Activated B cell treated with CpG ODN at 0.5 μM for 24 hours (primary cell): ENCODE measurements at regions of chr16 and their contacts with region 1.

Region 1: DNA sequence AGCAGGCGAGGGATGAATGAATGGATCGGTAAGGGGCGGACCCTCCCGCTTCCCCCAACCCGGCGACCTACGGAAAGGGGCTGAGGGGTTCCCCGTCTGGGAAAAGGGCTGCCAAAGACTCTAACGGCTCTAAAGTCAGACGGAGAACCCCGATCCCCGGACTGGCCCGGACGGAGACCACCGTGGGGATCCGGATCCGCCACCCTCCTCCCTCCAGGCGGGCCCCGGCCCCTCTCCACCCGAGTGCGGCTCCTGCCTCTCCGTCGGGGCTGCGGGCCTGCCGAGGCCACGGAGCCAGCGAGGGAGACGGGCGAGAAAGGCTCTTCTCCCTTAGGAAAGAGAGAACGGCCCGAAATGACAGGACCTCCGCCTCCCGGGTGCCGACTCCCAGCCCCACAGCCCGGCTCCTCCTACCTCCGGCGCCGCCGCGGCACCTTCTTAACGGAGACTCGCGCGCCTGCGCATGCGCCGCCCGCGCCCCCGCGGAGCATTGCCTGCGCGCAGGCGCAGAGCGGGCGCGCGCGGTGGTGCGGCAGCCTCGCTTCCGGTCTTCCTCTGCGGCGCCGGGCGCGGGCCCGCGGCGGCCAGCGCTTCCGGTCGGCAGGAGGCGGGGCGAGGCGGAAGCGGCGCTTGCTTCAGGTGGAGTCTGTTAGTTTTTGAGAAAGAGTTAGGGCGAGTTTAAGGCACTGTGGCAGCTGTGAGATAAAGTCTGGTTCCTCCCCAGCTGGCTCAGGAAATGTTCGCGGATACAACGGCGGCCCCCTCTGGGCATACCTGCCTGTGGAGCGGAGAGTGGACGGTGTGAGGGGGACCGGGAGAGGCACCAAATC is at the start of gene SLX4:
- DNase-seq: peak; percentile 95
- ATAC-seq: peak; percentile 85
- H3K4me3 Mint-ChIP-seq: peak within 1 kb of the TSS; percentile 100
- H3K27ac Mint-ChIP-seq: peak within 1 kb of the TSS; percentile 96
- H3K4me1 Mint-ChIP-seq: peaks cover 60% of the 10 kb centered on the region
- H3K27me3 Mint-ChIP-seq: no peaks in the 10 kb centered on the region
- CTCF ChIP-seq: no peak
- total RNA-seq, gene SLX4: 11.4 and 13.0 TPM in 2 replicates

Region 2: GRCh38 chr16:3198334-3199072 is 412.9 kb before region 1 on chr16:
- CTCF ChIA-PET with region 1: no interaction called
- POLR2A ChIA-PET with region 1: no interaction called
- intact Hi-C with region 1: no loop called
- DNase-seq: no peak
- ATAC-seq: no peak
- H3K4me3 Mint-ChIP-seq: no peak overlapping the region
- H3K27ac Mint-ChIP-seq: no peak overlapping the region
- H3K4me1 Mint-ChIP-seq: no peaks in the 10 kb centered on the region
- H3K27me3 Mint-ChIP-seq: peaks cover 37% of the 10 kb centered on the region
- CTCF ChIP-seq: no peak

Region 3: GRCh38 chr16:3530371-3530914 is 80.9 kb before region 1 on chr16:
- CTCF ChIA-PET with region 1: interaction called, 3 read pairs
- POLR2A ChIA-PET with region 1: no interaction called
- intact Hi-C with region 1: loop called (anchors 2 kb)
- DNase-seq: no peak
- ATAC-seq: no peak
- H3K4me3 Mint-ChIP-seq: no peak overlapping the region
- H3K27ac Mint-ChIP-seq: no peak overlapping the region
- H3K4me1 Mint-ChIP-seq: peaks cover 21% of the 10 kb centered on the region
- H3K27me3 Mint-ChIP-seq: no peaks in the 10 kb centered on the region
- CTCF ChIP-seq: no peak

Region 4: DNA sequence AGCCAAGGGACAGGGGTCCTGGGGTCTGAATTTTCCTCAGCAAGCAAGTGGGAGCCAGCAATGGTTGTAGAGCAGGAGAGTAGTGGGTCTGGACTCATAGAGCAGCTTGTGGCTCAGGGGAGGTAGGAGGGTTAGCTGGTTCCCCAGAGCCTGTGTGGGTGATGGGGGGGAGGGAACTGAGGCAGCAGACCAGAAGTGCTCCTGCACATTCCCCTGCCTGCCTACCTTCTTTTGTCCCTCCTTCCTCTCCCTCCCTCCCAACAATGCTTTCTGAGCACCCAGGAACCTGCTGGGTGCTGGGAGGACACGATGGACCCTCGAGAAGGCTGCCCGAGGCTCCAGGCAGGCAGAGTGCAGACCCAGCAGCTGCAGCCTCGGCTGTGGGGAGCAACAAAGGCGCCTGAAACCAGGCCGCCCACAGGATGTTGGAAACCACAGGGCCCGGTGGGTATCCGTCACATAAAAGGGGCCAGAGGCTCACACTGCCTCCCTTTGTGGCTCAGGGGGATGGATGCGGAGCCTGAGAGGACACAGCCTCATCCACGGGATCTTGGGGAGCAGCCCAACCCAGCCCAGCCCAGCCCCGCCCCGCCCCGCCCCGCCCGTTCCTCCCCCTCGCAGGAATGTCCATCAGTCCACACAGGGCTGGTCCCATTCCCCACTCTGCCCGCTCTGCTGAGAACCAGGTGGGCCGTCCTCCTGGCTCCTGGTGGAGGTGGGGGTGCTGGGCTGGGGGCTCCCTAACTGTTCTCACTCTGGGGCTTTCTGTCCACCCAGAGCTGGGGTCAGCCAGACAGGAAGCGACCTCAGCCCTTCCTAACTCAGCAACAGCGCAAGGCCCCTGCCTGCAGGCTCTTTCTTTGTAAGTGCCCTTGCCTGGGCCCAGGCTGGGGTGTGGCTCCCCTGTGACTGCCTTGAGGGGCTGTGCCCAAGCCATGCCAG is 32.5 kb before region 1 on chr16:
- CTCF ChIA-PET with region 1: interaction called, 3 read pairs
- POLR2A ChIA-PET with region 1: interaction called, 5 read pairs
- intact Hi-C with region 1: loop called (anchors 2 kb)
- DNase-seq: no peak
- ATAC-seq: peak; percentile 62
- H3K4me3 Mint-ChIP-seq: peak overlapping the region; percentile 78
- H3K27ac Mint-ChIP-seq: peak overlapping the region; percentile 92
- H3K4me1 Mint-ChIP-seq: peaks cover 55% of the 10 kb centered on the region
- H3K27me3 Mint-ChIP-seq: no peaks in the 10 kb centered on the region
- CTCF ChIP-seq: no peak

Region 5: DNA sequence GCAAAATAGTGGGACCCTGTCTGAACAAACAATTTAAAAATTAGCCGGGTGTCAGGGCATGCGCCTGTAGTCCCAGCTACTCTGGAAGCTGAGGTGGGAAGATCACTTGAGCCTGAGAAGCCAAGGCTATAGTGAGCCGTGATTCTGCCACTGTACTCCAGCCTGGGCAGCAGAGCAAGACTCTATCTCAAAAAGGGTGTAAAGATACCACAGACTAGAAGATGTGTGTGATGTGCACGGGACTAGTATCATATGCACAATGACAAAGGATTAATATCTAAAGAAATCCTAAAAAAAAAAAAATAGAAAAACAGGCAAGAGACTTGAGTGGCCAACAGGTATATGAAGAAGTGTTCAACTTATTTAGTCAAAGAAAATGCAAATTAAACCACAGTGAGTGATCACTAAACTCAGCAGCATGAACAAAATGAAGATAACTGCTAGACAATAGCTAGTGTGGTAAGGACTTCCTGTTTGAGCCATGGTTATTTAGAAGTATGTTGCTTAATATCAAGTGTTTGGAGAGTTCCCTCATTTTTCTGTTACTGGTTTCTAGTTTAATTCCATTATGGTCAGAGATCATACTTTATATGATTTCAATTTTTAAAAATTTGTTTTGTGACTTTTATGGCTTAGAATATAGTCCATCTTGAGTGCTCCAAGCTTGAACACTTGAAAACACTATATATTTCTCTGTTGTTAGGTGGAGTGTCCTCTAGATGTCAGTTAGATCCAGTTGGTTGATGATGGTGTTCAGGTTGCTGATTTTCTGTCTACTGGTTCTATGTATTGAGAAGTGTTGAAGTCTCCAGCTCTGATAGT is 14.8 kb after region 1 on chr16:
- CTCF ChIA-PET with region 1: no interaction called
- POLR2A ChIA-PET with region 1: interaction called, 8 read pairs
- intact Hi-C with region 1: loop called (anchors 1 kb)
- DNase-seq: no peak
- ATAC-seq: peak; percentile 82
- H3K4me3 Mint-ChIP-seq: peak overlapping the region; percentile 39
- H3K27ac Mint-ChIP-seq: peak overlapping the region; percentile 76
- H3K4me1 Mint-ChIP-seq: peaks cover 51% of the 10 kb centered on the region
- H3K27me3 Mint-ChIP-seq: no peaks in the 10 kb centered on the region
- CTCF ChIP-seq: no peak

Region 6: DNA sequence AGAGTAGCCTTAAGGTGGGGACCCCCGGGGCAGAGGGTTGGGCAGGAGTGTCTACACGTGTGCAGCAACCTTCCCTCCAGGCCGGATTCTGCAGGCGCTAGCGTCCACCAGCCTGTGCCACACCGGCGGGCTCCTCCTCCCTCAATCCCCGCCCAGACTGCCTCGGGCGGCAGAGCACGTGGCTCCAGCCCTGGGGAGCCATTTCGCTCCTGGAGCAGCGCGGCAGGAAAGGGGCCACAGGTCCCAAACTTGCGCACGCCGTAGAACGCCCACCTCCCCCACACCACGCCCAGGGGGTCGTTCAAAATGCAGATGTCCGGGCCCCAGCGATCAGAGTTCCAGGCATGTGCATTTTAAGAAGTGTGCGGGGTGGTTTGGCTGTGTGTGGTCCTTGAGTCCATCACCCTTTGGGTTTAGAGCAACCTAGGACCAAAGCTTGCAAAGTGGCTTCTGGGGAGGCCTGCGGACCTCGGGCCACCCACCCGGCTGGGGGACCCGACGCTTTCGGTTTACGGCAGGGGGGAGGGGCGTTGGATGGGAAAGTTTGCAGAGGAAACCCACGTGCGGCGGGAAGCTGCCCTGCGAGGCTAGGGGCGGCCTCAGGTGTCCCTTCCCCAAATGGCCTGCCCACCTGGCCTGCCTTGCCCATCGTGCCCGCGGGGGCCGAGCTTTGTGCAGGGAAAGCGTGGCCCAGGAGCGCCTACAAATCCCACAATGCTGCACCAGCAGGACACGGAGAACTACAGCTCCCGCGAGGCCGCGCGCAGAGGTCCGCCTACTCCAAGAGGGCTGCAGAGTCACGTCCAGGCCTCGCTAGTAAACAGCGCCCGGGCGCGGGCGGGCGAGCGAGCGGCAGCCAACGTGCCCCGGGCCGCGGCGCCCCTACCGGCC is 660.1 kb after region 1 on chr16:
- CTCF ChIA-PET with region 1: no interaction called
- POLR2A ChIA-PET with region 1: no interaction called
- intact Hi-C with region 1: loop called (anchors 5 kb)
- DNase-seq: peak; percentile 82
- ATAC-seq: peak; percentile 81
- H3K4me3 Mint-ChIP-seq: peak overlapping the region; percentile 86
- H3K27ac Mint-ChIP-seq: peak overlapping the region; percentile 88
- H3K4me1 Mint-ChIP-seq: peaks cover 11% of the 10 kb centered on the region
- H3K27me3 Mint-ChIP-seq: no peaks in the 10 kb centered on the region
- CTCF ChIP-seq: no peak